ENCODE measurements at regions of chr13 and their contacts with region 1.

Region 1: DNA sequence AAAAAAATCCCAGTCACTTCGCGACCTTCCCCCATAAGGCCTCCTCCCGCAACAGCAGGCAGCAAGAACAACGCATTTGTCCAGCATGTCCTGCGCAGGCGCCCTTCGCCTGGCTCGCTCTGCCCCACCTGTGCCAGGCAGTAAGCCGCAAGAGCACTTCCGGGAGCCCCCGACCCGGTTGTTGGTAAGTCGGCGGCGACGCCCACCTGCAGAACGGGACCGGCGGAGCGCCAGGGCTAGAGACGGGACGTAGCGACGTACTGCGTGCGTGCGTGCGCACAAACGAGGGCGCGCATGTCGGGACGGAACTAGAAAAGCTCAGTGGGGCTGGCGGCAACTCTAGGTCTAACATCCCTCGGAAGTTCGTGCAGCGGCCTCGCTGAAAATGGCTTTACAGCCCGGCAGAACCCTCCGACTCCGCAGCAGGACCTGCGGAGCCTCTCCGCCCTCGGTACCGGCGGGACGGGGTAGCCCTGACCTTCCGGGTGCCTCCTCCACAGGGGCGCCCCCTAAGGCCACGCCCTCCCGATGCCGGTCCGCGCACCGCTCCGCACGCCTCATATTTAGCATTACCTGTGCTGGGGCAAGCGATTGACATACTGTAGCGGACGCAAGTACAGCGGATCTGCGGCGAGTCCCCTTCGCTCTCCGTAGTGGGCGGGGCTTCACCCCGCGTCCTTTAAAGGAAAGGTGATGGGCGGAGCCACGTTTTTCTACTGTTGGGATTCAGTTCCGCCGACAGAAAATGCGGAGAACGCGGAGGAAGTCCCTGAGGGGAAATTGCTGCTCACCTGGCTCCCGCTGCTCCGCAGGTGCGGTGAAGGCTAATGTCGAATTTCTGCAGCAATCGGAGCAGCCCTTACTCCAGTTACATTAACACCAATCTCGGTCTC is at the start of gene MTIF3:
- DNase-seq: peak; percentile 95
- H3K4me3 Mint-ChIP-seq: peak within 1 kb of the TSS; percentile 84
- H3K27ac Mint-ChIP-seq: peak within 1 kb of the TSS; percentile 97
- H3K4me1 Mint-ChIP-seq: peaks cover 16% of the 10 kb centered on the region
- H3K27me3 Mint-ChIP-seq: no peaks in the 10 kb centered on the region
- CTCF ChIP-seq: no peak
- total RNA-seq, gene MTIF3: 35.6 and 40.9 TPM in 2 replicates

Region 2: GRCh38 chr13:26656919-26657318 is 793.3 kb before region 1 on chr13:
- CTCF ChIA-PET with region 1: no interaction called
- POLR2A ChIA-PET with region 1: no interaction called
- intact Hi-C with region 1: no loop called
- DNase-seq: peak; percentile 26
- H3K4me3 Mint-ChIP-seq: no peak overlapping the region
- H3K27ac Mint-ChIP-seq: no peak overlapping the region
- H3K4me1 Mint-ChIP-seq: no peaks in the 10 kb centered on the region
- H3K27me3 Mint-ChIP-seq: no peaks in the 10 kb centered on the region
- CTCF ChIP-seq: no peak

Region 3: DNA sequence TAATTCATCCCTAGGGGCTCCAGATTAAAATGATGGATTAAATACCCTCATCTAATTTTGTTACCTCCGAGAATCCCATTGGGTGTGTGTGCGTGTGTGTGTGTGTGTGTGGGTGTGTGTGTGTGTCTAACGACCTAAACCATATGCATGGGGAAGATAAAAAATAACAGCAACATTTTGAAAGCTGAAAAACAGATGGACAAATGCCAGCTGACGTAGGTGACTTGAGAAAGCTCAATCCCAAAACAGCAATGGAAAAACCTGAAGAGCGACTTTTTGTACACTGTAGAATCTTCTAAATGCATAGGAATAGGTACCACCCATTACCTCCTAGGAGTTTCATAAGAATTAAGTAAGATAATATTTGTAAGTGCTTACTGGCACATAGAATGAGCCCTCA is 207.5 kb before region 1 on chr13:
- CTCF ChIA-PET with region 1: no interaction called
- POLR2A ChIA-PET with region 1: no interaction called
- intact Hi-C with region 1: no loop called
- DNase-seq: no peak
- H3K4me3 Mint-ChIP-seq: no peak overlapping the region
- H3K27ac Mint-ChIP-seq: no peak overlapping the region
- H3K4me1 Mint-ChIP-seq: peaks cover 1% of the 10 kb centered on the region
- H3K27me3 Mint-ChIP-seq: no peaks in the 10 kb centered on the region
- CTCF ChIP-seq: no peak

Region 4: GRCh38 chr13:27374650-27375049 is 75.5 kb before region 1 on chr13:
- CTCF ChIA-PET with region 1: interaction called, 3 read pairs
- POLR2A ChIA-PET with region 1: no interaction called
- intact Hi-C with region 1: loop called (anchors 1 kb)
- DNase-seq: peak; percentile 86
- H3K4me3 Mint-ChIP-seq: no peak overlapping the region
- H3K27ac Mint-ChIP-seq: no peak overlapping the region
- H3K4me1 Mint-ChIP-seq: no peaks in the 10 kb centered on the region
- H3K27me3 Mint-ChIP-seq: peaks cover 10% of the 10 kb centered on the region
- CTCF ChIP-seq: peak; percentile 66

Region 5: DNA sequence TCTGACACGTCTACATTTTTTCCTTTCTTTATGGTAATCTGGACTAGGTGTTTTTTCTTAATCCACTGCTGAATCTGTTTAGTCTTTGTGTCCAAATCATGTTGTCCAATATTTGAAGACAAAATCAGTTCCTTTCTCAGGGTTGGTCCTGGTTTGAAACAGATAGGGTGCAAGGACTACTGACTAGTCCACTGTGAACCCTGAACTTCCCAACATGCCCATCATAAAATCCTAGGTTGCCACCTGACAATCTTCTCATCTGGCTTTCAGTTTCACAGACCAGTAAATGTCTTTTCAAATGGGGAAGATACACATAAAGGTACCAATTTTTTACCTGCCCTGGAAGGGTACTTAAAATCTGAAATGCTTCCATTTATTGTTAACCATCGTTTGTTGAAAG is 13.1 kb before region 1 on chr13:
- CTCF ChIA-PET with region 1: no interaction called
- POLR2A ChIA-PET with region 1: interaction called, 10 read pairs
- intact Hi-C with region 1: no loop called
- DNase-seq: no peak
- H3K4me3 Mint-ChIP-seq: no peak overlapping the region
- H3K27ac Mint-ChIP-seq: no peak overlapping the region
- H3K4me1 Mint-ChIP-seq: no peaks in the 10 kb centered on the region
- H3K27me3 Mint-ChIP-seq: no peaks in the 10 kb centered on the region
- CTCF ChIP-seq: no peak

Region 6: GRCh38 chr13:27481766-27482165 is 31.6 kb after region 1 on chr13:
- CTCF ChIA-PET with region 1: interaction called, 4 read pairs
- POLR2A ChIA-PET with region 1: interaction called, 15 read pairs
- intact Hi-C with region 1: no loop called
- DNase-seq: peak; percentile 46
- H3K4me3 Mint-ChIP-seq: no peak overlapping the region
- H3K27ac Mint-ChIP-seq: no peak overlapping the region
- H3K4me1 Mint-ChIP-seq: peaks cover 10% of the 10 kb centered on the region
- H3K27me3 Mint-ChIP-seq: no peaks in the 10 kb centered on the region
- CTCF ChIP-seq: peak; percentile 54

Region 7: DNA sequence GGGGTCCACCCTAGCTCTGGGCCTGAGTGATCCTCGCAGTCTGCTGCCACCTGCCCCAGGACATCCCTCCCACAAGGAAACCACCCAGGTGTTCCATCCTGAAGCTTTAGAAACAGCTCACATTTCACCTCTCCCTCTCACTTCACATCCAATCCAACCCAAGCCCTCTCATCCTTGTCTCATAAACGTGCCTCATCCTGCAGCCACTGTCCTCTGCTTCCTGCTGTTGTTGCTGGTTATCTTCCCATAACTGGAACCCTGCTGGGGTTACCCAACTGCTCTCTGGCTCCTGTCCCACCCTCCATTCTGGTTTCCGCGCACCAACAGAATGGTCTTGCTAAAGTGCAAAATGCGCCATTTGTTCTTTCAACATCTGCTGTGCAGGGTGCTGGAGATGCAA is 59.9 kb after region 1 on chr13:
- CTCF ChIA-PET with region 1: no interaction called
- POLR2A ChIA-PET with region 1: no interaction called
- intact Hi-C with region 1: no loop called
- DNase-seq: no peak
- H3K4me3 Mint-ChIP-seq: no peak overlapping the region
- H3K27ac Mint-ChIP-seq: no peak overlapping the region
- H3K4me1 Mint-ChIP-seq: no peaks in the 10 kb centered on the region
- H3K27me3 Mint-ChIP-seq: peaks cover 12% of the 10 kb centered on the region
- CTCF ChIP-seq: no peak

Region 8: GRCh38 chr13:27549406-27549981 is 99.3 kb after region 1 on chr13:
- CTCF ChIA-PET with region 1: no interaction called
- POLR2A ChIA-PET with region 1: interaction called, 11 read pairs
- intact Hi-C with region 1: no loop called
- DNase-seq: peak; percentile 73
- H3K4me3 Mint-ChIP-seq: no peak overlapping the region
- H3K27ac Mint-ChIP-seq: no peak overlapping the region
- H3K4me1 Mint-ChIP-seq: peaks cover 8% of the 10 kb centered on the region
- H3K27me3 Mint-ChIP-seq: no peaks in the 10 kb centered on the region
- CTCF ChIP-seq: no peak